ENCODE measurements at regions of chr4 and their contacts with region 1.

Region 1: GRCh38 chr4:40056716-40057585 is at the start of gene N4BP2:
- DNase-seq: peak; percentile 85 to 90 (median 88)
- ATAC-seq: peak; percentile 85
- H3K4me3 ChIP-seq: peak within 1 kb of the TSS; percentile 63
- H3K27ac ChIP-seq: peak within 1 kb of the TSS; percentile 98
- H3K4me1 ChIP-seq: peaks cover 12 to 28% of the 10 kb centered on the region in 2 experiments
- H3K27me3 ChIP-seq: no peaks in the 10 kb centered on the region
- CTCF ChIP-seq: peak; percentile 58 to 98 (median 96)
- EP300 ChIP-seq: no peak
- POLR2A ChIP-seq: peak; percentile 74
- RAD21 ChIP-seq: peak; percentile 79 to 83
- polyA plus RNA-seq, gene N4BP2: 2.7 to 3.3 TPM

Region 2: DNA sequence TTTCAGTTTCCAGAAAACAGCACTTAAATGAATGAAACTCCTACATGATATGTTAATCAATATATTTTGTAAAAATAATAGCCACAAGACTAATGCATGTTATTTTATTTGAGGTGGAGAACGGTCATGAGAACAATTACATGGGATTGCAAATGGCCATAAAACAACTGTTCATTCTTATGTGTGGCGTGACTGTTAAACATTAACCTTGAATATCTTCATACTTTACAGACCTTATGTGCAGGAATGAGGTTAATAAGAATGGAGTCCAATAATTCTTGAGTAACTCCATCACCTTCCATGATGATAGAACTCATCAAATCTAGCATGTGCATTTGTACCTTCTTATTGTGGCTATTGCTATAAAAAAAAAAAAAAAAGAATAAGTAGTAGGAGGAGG is 134.6 kb before region 1 on chr4:
- CTCF ChIA-PET with region 1: no interaction called
- POLR2A ChIA-PET with region 1: no interaction called
- in situ Hi-C with region 1: no loop called
- intact Hi-C with region 1: no loop called
- DNase-seq: no peak
- ATAC-seq: no peak
- H3K4me3 ChIP-seq: no peak overlapping the region
- H3K27ac ChIP-seq: no peak overlapping the region
- H3K4me1 ChIP-seq: no peaks in the 10 kb centered on the region
- H3K27me3 ChIP-seq: no peaks in the 10 kb centered on the region
- CTCF ChIP-seq: no peak
- EP300 ChIP-seq: no peak
- POLR2A ChIP-seq: no peak
- RAD21 ChIP-seq: no peak

Region 3: GRCh38 chr4:40121515-40121914 is 64.6 kb after region 1 on chr4:
- CTCF ChIA-PET with region 1: no interaction called
- POLR2A ChIA-PET with region 1: interaction called, 4 read pairs
- in situ Hi-C with region 1: no loop called
- intact Hi-C with region 1: loop called (anchors 5 kb)
- DNase-seq: peak in 3 of 4 experiments; percentile 14 to 76 (median 56)
- ATAC-seq: peak; percentile 93
- H3K4me3 ChIP-seq: no peak overlapping the region
- H3K27ac ChIP-seq: peak overlapping the region; percentile 64
- H3K4me1 ChIP-seq: peaks cover 0 to 28% of the 10 kb centered on the region in 2 experiments; a peak in 3 of 5 replicates
- H3K27me3 ChIP-seq: no peaks in the 10 kb centered on the region
- CTCF ChIP-seq: no peak
- EP300 ChIP-seq: 0 out of 2 replicates have a peak, but pooled peaks have one; percentile 31
- POLR2A ChIP-seq: no peak
- RAD21 ChIP-seq: no peak

Region 4: DNA sequence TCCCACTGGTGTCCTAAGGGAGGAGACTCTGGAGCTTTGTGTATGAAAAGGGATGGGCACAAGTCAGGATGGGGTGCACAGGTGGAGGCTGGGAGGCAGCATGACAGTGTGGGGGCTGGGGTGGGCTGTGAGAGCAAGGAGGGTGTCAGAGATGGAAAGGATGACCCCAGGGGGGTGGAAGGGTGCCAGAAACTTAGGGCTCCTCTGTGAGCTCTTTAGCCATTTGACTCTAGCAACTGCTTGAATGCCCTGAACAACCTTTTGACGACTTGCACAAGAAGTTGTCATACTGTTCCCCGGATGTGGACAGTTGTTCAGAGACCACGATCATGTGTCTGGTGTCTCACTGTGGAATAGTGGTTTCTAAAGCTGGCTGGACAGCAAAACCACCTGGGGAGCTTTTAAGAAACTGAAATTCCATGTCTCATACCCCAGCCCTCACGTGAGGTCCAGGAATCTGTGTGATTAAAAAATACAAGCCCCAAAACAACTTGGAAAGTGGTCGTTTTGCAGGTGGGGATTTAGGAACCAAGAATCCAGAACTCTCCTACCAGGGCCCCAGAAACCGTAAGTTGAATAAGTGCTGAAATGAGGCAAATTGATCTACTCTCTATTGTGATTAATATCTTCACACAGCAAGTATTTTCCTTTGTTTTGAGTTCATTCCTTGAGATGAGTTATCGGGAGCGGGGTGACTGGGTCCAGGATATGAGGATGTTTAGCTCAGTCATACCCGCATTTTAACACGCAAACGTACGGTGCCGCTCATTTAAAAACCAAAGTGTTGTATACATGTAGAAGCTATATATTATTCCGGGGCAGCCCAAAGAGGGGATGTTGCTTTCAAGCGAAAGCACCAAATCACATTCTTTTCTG is 143.3 kb after region 1 on chr4:
- CTCF ChIA-PET with region 1: no interaction called
- POLR2A ChIA-PET with region 1: interaction called, 8 read pairs
- in situ Hi-C with region 1: no loop called
- intact Hi-C with region 1: loop called (anchors 2 kb)
- DNase-seq: peak in 1 of 4 experiments; percentile 83
- ATAC-seq: peak; percentile 33
- H3K4me3 ChIP-seq: peak overlapping the region; percentile 50
- H3K27ac ChIP-seq: peak overlapping the region; percentile 85
- H3K4me1 ChIP-seq: peaks cover 34 to 48% of the 10 kb centered on the region in 2 experiments; a peak in 4 of 5 replicates
- H3K27me3 ChIP-seq: no peaks in the 10 kb centered on the region
- CTCF ChIP-seq: no peak
- EP300 ChIP-seq: 0 out of 2 replicates have a peak, but pooled peaks have one; percentile 4
- POLR2A ChIP-seq: no peak; the same call in 1 of the 2 replicates
- RAD21 ChIP-seq: 0 out of 4 replicates have a peak, but pooled peaks of 1 of the 2 experiments have one; percentile 9

Region 5: GRCh38 chr4:40247350-40247749 is 190.4 kb after region 1 on chr4:
- CTCF ChIA-PET with region 1: no interaction called
- POLR2A ChIA-PET with region 1: no interaction called
- in situ Hi-C with region 1: no loop called
- intact Hi-C with region 1: no loop called
- DNase-seq: no peak
- ATAC-seq: no peak; the same call in 2 of the 3 replicates
- H3K4me3 ChIP-seq: no peak overlapping the region
- H3K27ac ChIP-seq: no peak overlapping the region
- H3K4me1 ChIP-seq: peaks cover 8 to 9% of the 10 kb centered on the region in 2 experiments
- H3K27me3 ChIP-seq: no peaks in the 10 kb centered on the region
- CTCF ChIP-seq: no peak
- EP300 ChIP-seq: no peak
- POLR2A ChIP-seq: no peak
- RAD21 ChIP-seq: no peak

Region 6: GRCh38 chr4:40309250-40309774 is 252.4 kb after region 1 on chr4:
- CTCF ChIA-PET with region 1: interaction called, 7 read pairs
- POLR2A ChIA-PET with region 1: interaction called, 6 read pairs
- in situ Hi-C with region 1: loop called (anchors 5 kb)
- intact Hi-C with region 1: loop called (anchors 2 kb)
- DNase-seq: peak; percentile 72 to 92 (median 76)
- ATAC-seq: peak; percentile 90
- H3K4me3 ChIP-seq: no peak overlapping the region
- H3K27ac ChIP-seq: no peak overlapping the region; the same call in 2 of the 3 replicates
- H3K4me1 ChIP-seq: peaks cover 12 to 49% of the 10 kb centered on the region in 2 experiments
- H3K27me3 ChIP-seq: no peaks in the 10 kb centered on the region
- CTCF ChIP-seq: peak; percentile 90 to 92 (median 91)
- EP300 ChIP-seq: no peak
- POLR2A ChIP-seq: no peak
- RAD21 ChIP-seq: peak; percentile 84 to 93

Region 7: DNA sequence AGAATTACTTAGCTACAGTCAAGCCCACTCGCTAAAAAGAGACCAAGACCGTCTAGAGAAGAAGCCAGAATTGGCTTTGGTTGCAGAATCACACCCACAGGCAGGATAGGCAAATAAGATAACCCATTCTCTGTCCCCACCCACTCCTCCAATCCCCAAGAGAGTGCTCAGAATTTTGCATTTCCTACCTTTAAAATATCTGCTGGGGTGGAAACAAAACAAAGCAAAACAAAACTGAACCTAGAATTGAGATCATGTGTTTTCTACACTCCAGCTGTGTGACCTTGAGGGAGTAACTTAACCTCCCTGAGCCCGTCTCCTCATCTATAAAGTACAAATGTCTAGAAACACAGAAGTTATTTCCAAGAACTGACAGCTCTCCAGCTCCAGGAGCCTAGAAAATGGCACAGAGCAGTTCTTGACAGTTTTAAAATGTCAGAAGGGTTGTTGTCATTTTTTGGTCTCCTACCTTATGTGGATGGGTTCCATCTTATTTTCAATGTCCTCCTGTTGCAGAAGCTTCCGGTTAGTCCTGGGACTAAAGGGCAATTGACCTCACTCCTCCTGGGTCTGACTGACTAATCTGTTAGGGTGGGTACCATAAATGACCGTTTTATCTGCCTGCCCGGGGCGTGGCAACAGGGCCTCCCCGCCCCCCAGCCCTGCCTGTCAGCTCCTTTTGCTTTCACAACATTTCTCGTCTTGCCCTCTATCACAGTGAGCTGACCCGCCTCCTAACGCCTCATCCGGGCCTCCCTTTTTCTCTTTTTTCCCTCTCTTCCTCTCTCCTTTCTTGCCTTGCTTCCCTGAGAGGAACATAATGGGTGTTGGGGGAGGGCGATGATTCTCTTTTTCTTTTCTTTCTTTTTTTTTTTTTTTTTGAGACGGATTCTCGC is 458.7 kb after region 1 on chr4:
- CTCF ChIA-PET with region 1: no interaction called
- POLR2A ChIA-PET with region 1: interaction called, 3 read pairs
- in situ Hi-C with region 1: no loop called
- intact Hi-C with region 1: loop called (anchors 10 kb)
- DNase-seq: peak; percentile 81 to 93 (median 84)
- ATAC-seq: peak; percentile 90
- H3K4me3 ChIP-seq: peak overlapping the region; percentile 34
- H3K27ac ChIP-seq: peak overlapping the region; percentile 73
- H3K4me1 ChIP-seq: peaks cover 6 to 22% of the 10 kb centered on the region in 2 experiments; a peak in 4 of 5 replicates
- H3K27me3 ChIP-seq: no peaks in the 10 kb centered on the region
- CTCF ChIP-seq: no peak
- EP300 ChIP-seq: peak; percentile 81
- POLR2A ChIP-seq: peak; percentile 71
- RAD21 ChIP-seq: no peak; a peak in 1 of 4 replicates

Measured in K562 (cell line).